Gastrocnemius medialis (tissue), 4 donors: ENCODE measurements at regions of chr22 and their contacts with region 1.

Region 1: GRCh38 chr22:37676736-37677492 is 1.5 kb downstream of the LGALS1 start:
- DNase-seq: peak; percentile 73 to 87
- ATAC-seq: peak; percentile 32 to 38
- H3K4me3 ChIP-seq: peak overlapping the region; percentile 57 to 74 (median 70)
- H3K27ac ChIP-seq: peak overlapping the region; percentile 88 to 95 (median 91)
- H3K4me1 ChIP-seq: peaks cover 41 to 43% of the 10 kb centered on the region in 2 donors
- H3K27me3 ChIP-seq: no peaks in the 10 kb centered on the region
- CTCF ChIP-seq: no peak
- POLR2A ChIP-seq: peak; percentile 46 to 50

Region 2: DNA sequence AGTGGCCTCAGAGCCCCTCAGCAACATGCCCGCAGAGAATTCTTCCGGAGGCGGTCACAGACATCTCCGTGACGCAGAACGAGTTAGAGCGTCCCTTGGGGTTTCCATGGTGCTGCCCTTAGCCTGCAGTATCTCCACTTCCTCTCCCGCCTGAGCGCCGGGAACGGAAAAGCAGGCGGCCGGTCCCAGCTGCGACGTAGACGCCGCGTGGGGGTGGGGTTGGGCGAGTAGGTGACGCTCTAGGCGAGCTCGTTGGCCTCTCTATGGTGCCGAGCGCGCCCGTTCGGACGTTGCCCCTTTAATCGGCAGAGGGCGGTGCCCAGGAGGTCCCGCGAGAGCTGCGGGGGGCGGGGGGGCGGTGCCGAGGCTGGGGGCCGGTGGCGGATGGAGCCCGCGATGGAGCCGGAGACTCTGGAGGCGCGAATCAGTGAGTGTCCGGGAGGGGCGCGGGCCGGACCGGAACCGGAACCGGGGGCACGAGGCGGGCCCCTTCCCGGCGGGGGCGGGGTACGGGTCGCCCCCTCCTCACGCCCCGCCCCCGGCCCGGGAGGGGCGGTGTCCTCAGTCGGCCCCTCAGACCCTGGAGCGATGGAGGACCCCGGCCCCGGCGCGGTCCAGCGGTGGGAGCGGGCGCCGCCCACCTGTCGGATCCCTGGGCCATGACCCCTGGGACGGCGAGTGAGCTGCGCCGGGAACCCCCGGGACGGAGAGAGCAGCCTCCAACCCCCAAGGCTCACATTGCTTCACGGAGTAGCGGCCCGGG is 68.3 kb before region 1 on chr22 and contains the start of gene GGA1:
- in situ Hi-C with region 1: no loop called
- intact Hi-C with region 1: loop called (anchors 1 kb)
- DNase-seq: peak; percentile 91 to 93
- ATAC-seq: peak; percentile 92 to 96
- H3K4me3 ChIP-seq: peak within 1 kb of the TSS; percentile 88 to 98 (median 92)
- H3K27ac ChIP-seq: peak within 1 kb of the TSS; percentile 90 to 98 (median 95)
- H3K4me1 ChIP-seq: peaks cover 28 to 34% of the 10 kb centered on the region in 2 donors
- H3K27me3 ChIP-seq: no peaks in the 10 kb centered on the region
- CTCF ChIP-seq: no peak
- POLR2A ChIP-seq: peak in 1 of 2 donors; percentile 30
- total RNA-seq, gene GGA1: 39.0 to 48.8 (median 45.0) TPM

Region 3: GRCh38 chr22:37623075-37624016 is 53.6 kb before region 1 on chr22:
- in situ Hi-C with region 1: loop called in 1 of 4 experiments (anchors 10 kb)
- intact Hi-C with region 1: loop called (anchors 5 kb)
- DNase-seq: peak in 1 of 2 donors; percentile 60
- ATAC-seq: peak; percentile 33 to 45
- H3K4me3 ChIP-seq: no peak overlapping the region
- H3K27ac ChIP-seq: no peak overlapping the region
- H3K4me1 ChIP-seq: peaks cover 14 to 15% of the 10 kb centered on the region in 2 donors
- H3K27me3 ChIP-seq: no peaks in the 10 kb centered on the region
- CTCF ChIP-seq: peak; percentile 36 to 91 (median 64)
- POLR2A ChIP-seq: no peak

Region 4: GRCh38 chr22:37643225-37643847 is 33.6 kb before region 1 on chr22:
- in situ Hi-C with region 1: loop called in 2 of 4 experiments (anchors 5 kb)
- intact Hi-C with region 1: loop called (anchors 1 kb)
- DNase-seq: peak; percentile 38 to 77
- ATAC-seq: peak; percentile 79 to 88
- H3K4me3 ChIP-seq: no peak overlapping the region
- H3K27ac ChIP-seq: no peak overlapping the region
- H3K4me1 ChIP-seq: peaks cover 0 to 9% of the 10 kb centered on the region in 2 donors
- H3K27me3 ChIP-seq: peaks cover 7 to 14% (median 12%) of the 10 kb centered on the region in 3 donors
- CTCF ChIP-seq: peak; percentile 77 to 96 (median 94)
- POLR2A ChIP-seq: no peak

Region 5: DNA sequence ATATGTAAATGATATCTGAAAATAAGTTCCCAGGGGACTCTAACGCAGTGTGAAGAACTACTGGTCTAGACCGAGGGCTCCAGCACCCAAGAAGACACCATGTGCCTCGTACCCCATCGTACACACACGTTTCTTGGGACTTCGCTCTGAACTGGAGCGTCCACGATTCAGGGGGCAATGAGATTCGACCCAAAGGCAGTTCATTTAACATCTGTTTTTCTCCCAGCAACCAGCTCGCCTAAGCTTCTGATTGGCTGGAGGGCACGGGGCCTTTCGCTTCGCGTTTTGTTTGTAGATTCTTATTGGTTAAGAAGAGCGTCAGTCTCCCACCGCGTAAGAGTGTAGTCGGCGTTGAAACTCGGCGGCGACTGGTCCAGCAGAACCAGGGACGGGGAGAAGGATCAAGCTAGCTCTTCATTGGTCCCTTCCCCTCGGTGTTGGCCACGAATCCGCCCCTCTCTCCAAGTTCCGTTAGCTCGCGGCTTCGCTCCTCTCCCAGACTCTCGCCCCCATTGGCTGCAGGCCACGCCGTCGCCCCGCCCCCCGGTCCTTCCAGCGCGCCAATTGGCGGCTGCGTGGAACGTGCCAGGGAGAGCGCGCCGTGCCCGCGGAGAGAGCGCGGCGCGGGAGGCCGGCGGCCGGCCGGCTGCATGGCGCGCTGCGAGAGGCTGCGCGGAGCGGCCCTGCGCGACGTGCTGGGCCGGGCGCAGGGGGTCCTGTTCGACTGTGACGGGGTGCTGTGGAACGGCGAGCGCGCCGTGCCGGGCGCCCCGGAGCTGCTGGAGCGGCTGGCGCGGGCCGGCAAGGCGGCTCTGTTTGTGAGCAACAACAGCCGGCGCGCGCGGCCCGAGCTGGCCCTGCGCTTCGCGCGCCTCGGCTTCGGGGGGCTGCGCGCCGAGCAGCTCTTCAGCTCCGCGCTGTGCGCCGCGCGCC is 18.5 kb before region 1 on chr22 and contains the start of gene PDXP:
- in situ Hi-C with region 1: no loop called
- intact Hi-C with region 1: loop called (anchors 1 kb)
- DNase-seq: peak; percentile 100
- ATAC-seq: peak; percentile 97 to 99
- H3K4me3 ChIP-seq: peak within 1 kb of the TSS; percentile 57 to 65 (median 63)
- H3K27ac ChIP-seq: peak within 1 kb of the TSS; percentile 81 to 88 (median 86)
- H3K4me1 ChIP-seq: peaks cover 35 to 39% of the 10 kb centered on the region in 2 donors
- H3K27me3 ChIP-seq: no peaks in the 10 kb centered on the region
- CTCF ChIP-seq: peak in 1 of 5 experiments; percentile 14
- POLR2A ChIP-seq: peak; percentile 90 to 94
- total RNA-seq, gene PDXP: 10.3 to 28.7 (median 16.6) TPM

Region 6: GRCh38 chr22:37745548-37746365 is 68.8 kb after region 1 on chr22:
- in situ Hi-C with region 1: no loop called
- intact Hi-C with region 1: loop called (anchors 5 kb)
- DNase-seq: peak; percentile 87 to 89
- ATAC-seq: peak; percentile 86
- H3K4me3 ChIP-seq: peak overlapping the region; percentile 84 to 99 (median 96)
- H3K27ac ChIP-seq: peak overlapping the region; percentile 86 to 93 (median 88)
- H3K4me1 ChIP-seq: peaks cover 28 to 31% of the 10 kb centered on the region in 2 donors
- H3K27me3 ChIP-seq: no peaks in the 10 kb centered on the region
- CTCF ChIP-seq: no peak
- POLR2A ChIP-seq: peak; percentile 67 to 72

Region 7: GRCh38 chr22:37807410-37808293 is 130.7 kb after region 1 on chr22 and contains the start of gene GCAT:
- in situ Hi-C with region 1: no loop called
- intact Hi-C with region 1: loop called (anchors 5 kb)
- DNase-seq: peak; percentile 95 to 97
- ATAC-seq: peak; percentile 79 to 83
- H3K4me3 ChIP-seq: peak within 1 kb of the TSS; percentile 76 to 87 (median 82)
- H3K27ac ChIP-seq: peak within 1 kb of the TSS; percentile 91 to 95 (median 94)
- H3K4me1 ChIP-seq: peaks cover 16 to 17% of the 10 kb centered on the region in 2 donors
- H3K27me3 ChIP-seq: no peaks in the 10 kb centered on the region
- CTCF ChIP-seq: no peak
- POLR2A ChIP-seq: peak; percentile 68 to 78
- total RNA-seq, gene GCAT: 10.0 to 21.5 (median 15.1) TPM